GM18951 (cell line): ENCODE measurements at regions of chr4 and their contacts with region 1.

Region 1: GRCh38 chr4:144174401-144175067 is 34.0 kb upstream of the GYPA start:
- POLR2A ChIP-seq: no peak

Region 2: GRCh38 chr4:143743591-143743990 is 430.9 kb before region 1 on chr4:
- in situ Hi-C with region 1: no loop called
- POLR2A ChIP-seq: no peak

Region 3: DNA sequence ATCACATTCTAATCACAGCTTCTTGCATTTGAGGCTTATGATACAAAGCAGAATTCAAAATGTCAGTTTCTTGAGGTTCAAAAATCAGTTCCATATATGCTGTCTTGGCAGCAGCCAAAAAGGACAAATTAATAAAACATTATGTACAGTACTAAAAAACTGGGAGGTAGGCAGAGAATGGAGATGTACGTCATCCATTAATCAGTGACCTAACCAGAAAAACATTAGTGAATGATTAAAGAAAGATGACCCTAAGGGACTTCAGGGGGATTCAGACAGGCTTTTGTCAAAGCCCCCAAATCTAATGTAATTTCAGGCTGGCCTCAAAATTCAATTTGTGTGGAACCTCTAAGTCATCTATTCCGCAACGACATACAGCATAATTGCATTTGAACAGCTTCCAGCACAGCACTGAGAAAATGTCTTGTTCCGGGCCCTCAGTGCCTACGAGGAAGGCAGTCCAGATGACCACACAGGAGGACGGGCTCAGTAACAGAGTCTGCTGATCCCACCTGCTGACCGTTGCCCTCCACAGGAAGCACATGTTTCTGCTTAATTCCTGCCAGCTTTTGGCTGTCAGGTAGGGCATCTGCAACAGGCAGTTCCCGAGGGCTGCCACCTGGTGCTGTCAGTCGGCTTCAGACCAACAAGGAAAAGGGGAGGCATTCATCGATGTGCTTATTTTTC is 387.6 kb after region 1 on chr4:
- in situ Hi-C with region 1: loop called (anchors 10 kb)
- POLR2A ChIP-seq: no peak

Region 4: GRCh38 chr4:144787365-144788258 is 613.1 kb after region 1 on chr4:
- in situ Hi-C with region 1: loop called (anchors 25 kb)
- POLR2A ChIP-seq: no peak